A549 (cell line): ENCODE measurements at regions of chr12 and their contacts with region 1.

Region 1: DNA sequence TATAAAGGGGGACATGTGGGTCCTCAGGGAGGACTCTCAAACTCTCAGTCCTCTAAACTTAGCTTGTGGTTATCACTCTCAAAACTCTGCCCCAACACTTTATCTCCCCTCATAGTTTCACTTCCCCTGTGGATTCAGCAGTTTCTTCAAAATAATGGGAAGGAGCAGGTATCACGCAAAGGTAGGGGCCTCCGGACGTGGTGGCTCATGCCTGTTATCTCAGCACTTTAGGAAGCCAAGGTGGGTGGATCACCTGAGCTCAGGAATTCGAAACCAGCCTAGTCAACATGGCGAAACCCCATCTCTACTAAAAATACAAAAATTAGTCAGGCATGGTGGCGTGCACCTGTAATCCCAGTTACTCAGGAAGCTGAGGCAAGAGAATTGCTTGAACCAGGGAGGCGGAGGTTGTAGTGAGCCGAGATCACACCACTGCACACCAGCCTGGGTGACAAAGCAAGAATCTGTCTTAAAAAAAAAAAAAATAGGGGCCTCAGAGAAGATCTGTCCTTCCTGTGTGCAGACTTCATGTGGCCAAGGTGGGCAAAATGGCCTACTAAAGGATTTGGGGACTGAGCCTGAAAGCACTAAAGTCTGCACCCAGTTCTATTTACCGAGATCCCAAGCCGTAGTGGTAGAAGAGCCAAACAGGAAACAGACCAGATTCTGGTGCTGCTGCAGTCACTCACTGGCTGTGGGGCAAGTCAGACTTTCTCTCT is 6.4 kb downstream of the ITGB7 start:
- DNase-seq: no peak
- ATAC-seq: no peak
- H3K4me3 ChIP-seq: no peak overlapping the region
- H3K27ac ChIP-seq: no peak overlapping the region
- H3K4me1 ChIP-seq: peaks cover 21% of the 10 kb centered on the region
- CTCF ChIP-seq: no peak
- EP300 ChIP-seq: no peak
- POLR2A ChIP-seq: no peak
- RAD21 ChIP-seq: no peak

Region 2: GRCh38 chr12:52416383-52416750 is 784.2 kb before region 1 on chr12:
- CTCF ChIA-PET with region 1: no interaction called
- POLR2A ChIA-PET with region 1: no interaction called
- DNase-seq: peak in 1 of 2 experiments; percentile 56
- ATAC-seq: 0 out of 6 replicates have a peak, but pooled peaks of 1 of the 2 experiments have one; percentile 51
- H3K4me3 ChIP-seq: no peak overlapping the region
- H3K27ac ChIP-seq: peak overlapping the region in 1 of 2 experiments; percentile 17; a peak in 1 of 6 replicates
- H3K4me1 ChIP-seq: peaks cover 29% of the 10 kb centered on the region
- CTCF ChIP-seq: no peak
- EP300 ChIP-seq: no peak
- POLR2A ChIP-seq: no peak
- RAD21 ChIP-seq: no peak

Region 3: GRCh38 chr12:53079226-53080117 is 121.1 kb before region 1 on chr12 and contains the start of gene SPRYD3:
- CTCF ChIA-PET with region 1: interaction called, 6 read pairs
- POLR2A ChIA-PET with region 1: interaction called, 12 read pairs
- DNase-seq: peak; percentile 99 to 100
- ATAC-seq: peak; percentile 98 to 99
- H3K4me3 ChIP-seq: peak within 1 kb of the TSS; percentile 56
- H3K27ac ChIP-seq: peak within 1 kb of the TSS; percentile 86 to 94
- H3K4me1 ChIP-seq: peaks cover 10% of the 10 kb centered on the region; the same call in 2 of the 3 replicates
- CTCF ChIP-seq: no peak
- EP300 ChIP-seq: no peak
- POLR2A ChIP-seq: peak; percentile 99
- RAD21 ChIP-seq: no peak
- polyA plus RNA-seq, gene SPRYD3: 26.8 and 28.1 TPM in 2 replicates

Region 4: DNA sequence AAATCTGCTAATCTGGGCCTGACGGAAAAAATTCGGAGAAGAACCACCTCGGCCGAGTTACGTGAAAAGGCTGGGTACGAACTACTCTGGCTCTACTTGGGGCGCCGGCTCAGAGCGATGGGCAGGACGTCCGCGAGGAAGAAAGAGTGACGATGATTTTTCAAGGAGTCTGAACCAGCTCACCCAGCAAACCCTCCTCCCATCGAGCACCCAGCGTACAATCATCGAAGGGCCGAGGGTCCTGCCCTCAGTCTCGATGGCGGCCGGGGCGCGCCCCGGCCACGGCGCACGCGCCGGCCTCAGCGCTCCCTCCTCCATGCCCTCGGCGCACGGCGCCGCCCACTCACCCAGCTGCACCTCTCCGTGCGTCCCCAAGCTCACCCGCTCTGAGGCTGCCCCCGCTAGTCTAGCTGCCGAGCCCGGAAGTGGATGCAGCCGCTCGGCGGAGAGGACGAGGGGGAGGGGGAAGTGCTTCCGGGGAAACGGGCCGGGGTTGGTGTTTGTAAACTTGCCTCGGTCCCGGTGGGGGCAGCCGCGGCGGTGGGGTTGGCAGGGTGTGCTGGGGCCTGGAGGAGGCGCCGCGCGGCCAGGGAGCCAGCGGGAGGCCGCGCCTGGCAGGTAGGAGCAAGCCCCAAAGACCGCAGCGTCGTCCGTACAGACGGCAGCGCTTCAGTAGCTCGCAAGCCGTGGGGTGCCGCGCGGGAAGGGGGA is 20.2 kb before region 1 on chr12 and contains the starts of genes CSAD and ZNF740:
- CTCF ChIA-PET with region 1: interaction called, 451 read pairs
- POLR2A ChIA-PET with region 1: interaction called, 13 read pairs
- DNase-seq: peak; percentile 98 to 99
- ATAC-seq: peak; percentile 97 to 98
- H3K4me3 ChIP-seq: peak within 1 kb of the TSS; percentile 76
- H3K27ac ChIP-seq: peak within 1 kb of the TSS; percentile 92 to 93
- H3K4me1 ChIP-seq: peaks cover 39% of the 10 kb centered on the region
- CTCF ChIP-seq: no peak
- EP300 ChIP-seq: no peak; a peak in 1 of 5 replicates
- POLR2A ChIP-seq: peak; percentile 90
- RAD21 ChIP-seq: 0 out of 5 replicates have a peak, but pooled peaks of 1 of the 2 experiments have one; percentile 14
- polyA plus RNA-seq, gene CSAD: 16.5 and 19.2 TPM in 2 replicates
- polyA plus RNA-seq, gene ZNF740: 28.8 and 32.9 TPM in 2 replicates